ENCODE measurements at regions of chr20 and their contacts with region 1.

Region 1: GRCh38 chr20:10673988-10674711 is at the start of gene JAG1:
- DNase-seq: peak; percentile 95
- H3K4me3 Mint-ChIP-seq: peak within 1 kb of the TSS; percentile 82
- H3K27ac Mint-ChIP-seq: peak within 1 kb of the TSS; percentile 93
- H3K4me1 Mint-ChIP-seq: peaks cover 19% of the 10 kb centered on the region
- H3K27me3 Mint-ChIP-seq: no peaks in the 10 kb centered on the region
- CTCF ChIP-seq: no peak
- total RNA-seq, gene JAG1: 156 and 245 TPM in 2 replicates

Region 2: GRCh38 chr20:10636326-10636818 is 37.8 kb before region 1 on chr20:
- CTCF ChIA-PET with region 1: no interaction called
- intact Hi-C with region 1: no loop called
- DNase-seq: no peak
- H3K4me3 Mint-ChIP-seq: no peak overlapping the region
- H3K27ac Mint-ChIP-seq: no peak overlapping the region
- H3K4me1 Mint-ChIP-seq: peaks cover 9% of the 10 kb centered on the region
- H3K27me3 Mint-ChIP-seq: no peaks in the 10 kb centered on the region
- CTCF ChIP-seq: no peak

Region 3: DNA sequence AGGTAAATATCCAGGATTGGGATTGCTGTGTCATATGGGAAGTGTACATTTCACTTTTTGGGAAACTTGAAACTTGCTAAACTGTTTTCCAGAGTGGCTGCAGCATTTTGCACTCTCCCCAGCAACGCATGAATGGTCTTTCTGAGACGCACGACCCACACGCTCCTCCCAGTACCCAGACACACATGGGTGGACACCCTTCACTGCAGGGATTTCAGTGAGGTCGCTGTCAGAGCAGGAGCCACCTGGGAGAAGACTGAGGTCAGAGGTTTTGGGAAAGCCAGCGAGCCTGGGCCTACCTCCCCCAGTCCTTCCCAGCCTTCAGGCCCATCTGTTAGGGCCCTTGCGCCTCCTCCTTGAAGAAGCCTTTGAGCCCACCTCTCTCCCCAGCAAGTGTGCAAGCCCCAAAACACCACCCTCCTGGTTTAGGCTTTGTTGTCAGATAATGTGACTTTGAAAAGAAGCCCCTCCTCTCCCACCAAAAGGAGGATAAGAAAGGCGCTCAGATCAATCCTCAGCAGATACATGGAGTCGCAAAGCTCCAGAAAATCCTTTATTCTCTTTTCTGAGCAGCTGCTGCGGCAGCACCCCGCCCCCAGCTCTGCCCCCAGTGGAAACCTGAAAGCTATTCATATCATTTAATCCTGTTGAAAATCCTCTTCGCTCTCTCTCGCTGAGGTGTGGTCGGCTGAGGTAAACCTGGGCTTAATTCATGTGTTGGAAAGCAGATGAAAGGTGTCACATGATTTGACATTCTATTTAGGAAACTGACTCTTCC is 12.4 kb after region 1 on chr20:
- CTCF ChIA-PET with region 1: no interaction called
- intact Hi-C with region 1: no loop called
- DNase-seq: no peak
- H3K4me3 Mint-ChIP-seq: no peak overlapping the region
- H3K27ac Mint-ChIP-seq: no peak overlapping the region
- H3K4me1 Mint-ChIP-seq: no peaks in the 10 kb centered on the region
- H3K27me3 Mint-ChIP-seq: no peaks in the 10 kb centered on the region
- CTCF ChIP-seq: no peak

Region 4: DNA sequence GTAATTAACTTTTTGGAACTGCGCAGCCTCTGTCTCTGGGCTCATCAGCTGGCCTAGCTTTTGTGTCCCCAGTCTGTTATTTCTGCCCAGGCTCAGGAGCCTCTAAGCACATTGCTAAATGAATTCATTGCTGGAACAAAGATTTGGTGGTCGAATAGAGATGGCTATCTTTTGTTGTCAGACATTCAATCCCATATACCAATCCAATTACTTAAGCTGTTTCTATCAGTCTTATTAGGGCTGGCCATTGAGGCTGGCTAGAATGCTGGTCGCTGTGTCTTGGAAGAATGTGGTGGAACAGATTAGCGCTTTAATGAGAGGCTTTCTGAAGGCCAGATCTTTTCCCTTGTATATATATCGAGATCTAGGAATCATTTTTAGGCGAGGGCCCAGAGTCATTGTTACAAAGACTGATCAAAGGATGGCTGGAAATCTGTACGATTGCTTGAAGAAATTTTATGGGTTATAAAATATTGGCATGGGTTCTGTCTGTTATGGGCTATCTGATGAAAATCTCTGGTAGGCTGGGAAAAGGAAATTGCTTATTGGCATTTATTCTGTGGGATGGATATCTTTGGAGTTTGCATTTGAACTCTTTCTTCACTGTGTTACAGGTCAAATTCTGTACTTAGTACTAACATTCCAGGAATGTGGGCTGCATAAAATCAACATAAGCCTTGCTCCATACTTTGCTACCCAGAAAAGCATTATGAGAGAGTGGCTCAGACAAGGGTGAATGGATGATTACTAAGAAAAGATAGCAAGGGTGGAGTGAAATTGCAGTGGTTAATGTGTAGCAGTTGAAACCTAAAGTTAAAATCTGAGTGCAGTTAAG is 34.4 kb after region 1 on chr20:
- CTCF ChIA-PET with region 1: interaction called, 7 read pairs
- intact Hi-C with region 1: loop called (anchors 2 kb)
- DNase-seq: no peak
- H3K4me3 Mint-ChIP-seq: peak overlapping the region; percentile 43
- H3K27ac Mint-ChIP-seq: peak overlapping the region; percentile 96
- H3K4me1 Mint-ChIP-seq: peaks cover 53% of the 10 kb centered on the region
- H3K27me3 Mint-ChIP-seq: no peaks in the 10 kb centered on the region
- CTCF ChIP-seq: no peak

Region 5: GRCh38 chr20:10954137-10954840 is 280.1 kb after region 1 on chr20:
- CTCF ChIA-PET with region 1: no interaction called
- intact Hi-C with region 1: loop called (anchors 5 kb)
- DNase-seq: peak; percentile 53
- H3K4me3 Mint-ChIP-seq: no peak overlapping the region
- H3K27ac Mint-ChIP-seq: no peak overlapping the region
- H3K4me1 Mint-ChIP-seq: peaks cover 28% of the 10 kb centered on the region
- H3K27me3 Mint-ChIP-seq: no peaks in the 10 kb centered on the region
- CTCF ChIP-seq: no peak

Region 6: DNA sequence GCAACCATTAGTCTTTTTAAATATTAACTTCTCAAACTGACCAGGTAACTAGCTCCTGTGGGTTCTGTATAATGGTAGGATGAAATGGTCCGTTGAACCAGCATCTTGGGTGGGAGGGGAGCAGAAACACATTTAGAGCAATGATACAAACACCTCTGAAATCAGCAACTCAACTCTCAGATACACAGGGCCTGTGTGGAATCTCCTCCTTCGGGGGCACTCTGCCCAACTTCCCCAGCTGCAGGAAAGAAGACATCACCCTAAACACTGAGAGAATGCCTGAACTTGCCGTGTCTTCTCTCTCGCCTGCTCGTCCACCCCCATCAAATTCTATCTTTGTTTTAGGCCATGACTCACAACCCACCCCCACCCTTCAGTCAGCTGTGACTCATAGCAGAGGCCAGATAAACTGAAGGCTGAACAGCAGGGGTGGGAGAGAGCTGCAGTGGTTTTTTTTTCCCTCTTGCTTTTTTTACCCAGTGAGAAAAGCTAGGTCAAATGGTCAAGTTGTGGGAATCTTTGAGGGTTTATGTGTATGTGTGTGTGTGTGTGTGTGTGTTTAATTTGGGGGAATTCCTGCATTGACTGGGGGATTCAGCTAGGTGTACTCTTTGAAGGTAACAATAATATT is 593.1 kb after region 1 on chr20:
- CTCF ChIA-PET with region 1: interaction called, 16 read pairs
- intact Hi-C with region 1: loop called (anchors 5 kb)
- DNase-seq: peak; percentile 52
- H3K4me3 Mint-ChIP-seq: peak overlapping the region; percentile 31
- H3K27ac Mint-ChIP-seq: peak overlapping the region; percentile 59
- H3K4me1 Mint-ChIP-seq: peaks cover 61% of the 10 kb centered on the region
- H3K27me3 Mint-ChIP-seq: no peaks in the 10 kb centered on the region
- CTCF ChIP-seq: no peak

Region 7: GRCh38 chr20:11274141-11274594 is 600.0 kb after region 1 on chr20:
- CTCF ChIA-PET with region 1: no interaction called
- intact Hi-C with region 1: loop called (anchors 5 kb)
- DNase-seq: peak; percentile 38
- H3K4me3 Mint-ChIP-seq: no peak overlapping the region
- H3K27ac Mint-ChIP-seq: no peak overlapping the region
- H3K4me1 Mint-ChIP-seq: peaks cover 19% of the 10 kb centered on the region
- H3K27me3 Mint-ChIP-seq: no peaks in the 10 kb centered on the region
- CTCF ChIP-seq: no peak